ENCODE measurements at regions of chr5 and their contacts with region 1.

Region 1: GRCh38 chr5:38441453-38442246 is 114.8 kb downstream of the LIFR start:
- DNase-seq: peak; percentile 94

Region 2: DNA sequence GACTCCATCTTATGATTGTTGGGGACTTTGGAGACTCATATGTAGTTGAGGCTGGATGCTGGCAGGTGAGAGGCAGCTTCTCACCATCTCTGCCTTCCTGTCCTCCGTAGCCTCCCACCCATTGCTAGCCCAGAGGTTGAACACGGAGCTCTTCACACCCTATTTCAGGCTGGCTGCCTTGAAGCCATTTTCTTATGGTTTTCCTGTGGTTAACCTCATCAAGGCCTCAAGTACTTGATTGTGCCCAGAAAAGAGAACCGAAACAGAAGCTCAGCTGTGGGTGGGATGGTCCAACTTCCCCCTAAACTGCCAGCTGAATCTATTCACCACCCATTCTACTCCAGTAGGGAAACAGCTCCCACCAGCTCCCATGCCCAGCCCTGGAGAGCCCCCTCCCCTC is 11.9 kb after region 1 on chr5:
- intact Hi-C with region 1: no loop called
- DNase-seq: no peak

Region 3: GRCh38 chr5:38556599-38557305 is 115.1 kb after region 1 on chr5 and contains the start of gene LIFR:
- intact Hi-C with region 1: loop called in 1 of 2 experiments (anchors 10 kb)
- DNase-seq: peak; percentile 93
- total RNA-seq, gene LIFR: 75.0 to 80.4 TPM

Region 4: DNA sequence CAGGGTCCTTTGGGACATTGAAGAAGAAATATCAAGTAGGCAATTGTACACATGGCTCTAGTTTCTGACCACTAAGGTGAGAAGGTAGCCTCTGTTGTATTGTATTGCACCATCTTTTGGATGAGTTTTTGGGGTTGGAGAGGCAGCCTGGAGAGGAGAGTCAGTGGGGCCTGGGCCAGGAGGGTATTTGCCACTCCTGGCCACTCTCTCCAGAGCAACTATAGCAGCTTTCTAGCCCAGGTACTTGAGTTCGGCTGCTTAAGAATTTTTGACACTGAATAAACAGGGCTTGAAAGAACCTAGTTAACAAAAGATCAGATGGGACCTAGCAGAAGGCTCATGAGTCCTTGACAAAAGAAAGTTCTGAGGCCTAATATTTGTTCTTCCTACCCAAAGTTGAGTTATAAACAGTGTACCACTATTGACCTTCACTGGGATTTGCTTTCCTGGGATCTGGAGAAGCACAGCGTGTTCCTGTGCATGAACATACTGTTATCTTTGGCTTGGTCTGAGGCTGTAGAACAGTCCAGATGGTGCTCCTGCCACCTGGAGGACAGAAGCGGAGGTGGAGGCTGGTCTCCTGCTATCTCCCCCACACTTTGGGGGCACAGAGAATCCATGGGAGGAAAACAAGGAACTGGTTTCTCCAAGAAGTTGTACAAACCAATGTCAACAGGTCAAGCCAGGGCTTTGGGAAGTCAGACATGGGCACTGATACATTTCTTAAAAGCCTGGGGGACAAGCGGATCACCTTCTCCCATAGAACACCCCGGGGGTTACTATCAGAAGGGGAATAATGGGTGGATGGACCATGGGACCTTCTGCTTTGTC is 225.2 kb after region 1 on chr5:
- intact Hi-C with region 1: loop called in 1 of 2 experiments (anchors 5 kb)
- DNase-seq: no peak

Region 5: GRCh38 chr5:39815711-39816110 is 1374.1 kb after region 1 on chr5:
- intact Hi-C with region 1: no loop called
- DNase-seq: no peak

Measured in posterior vena cava (tissue), 2 donors.